ENCODE measurements at regions of chr17 and their contacts with region 1.

Region 1: GRCh38 chr17:58447039-58447975 is 30.0 kb upstream of the RNF43 start:
- DNase-seq: peak; percentile 88
- ATAC-seq: peak; percentile 99
- H3K4me3 ChIP-seq: no peak overlapping the region
- H3K27ac ChIP-seq: no peak overlapping the region
- H3K4me1 ChIP-seq: peaks cover 11% of the 10 kb centered on the region; the same call in 1 of the 2 replicates
- H3K27me3 ChIP-seq: peaks cover 0 to 14% of the 10 kb centered on the region in 2 experiments; a peak in 2 of 5 replicates
- CTCF ChIP-seq: peak; percentile 97
- EP300 ChIP-seq: peak in 1 of 2 experiments; percentile 9; a peak in 1 of 4 replicates
- POLR2A ChIP-seq: no peak
- RAD21 ChIP-seq: peak; percentile 98

Region 2: DNA sequence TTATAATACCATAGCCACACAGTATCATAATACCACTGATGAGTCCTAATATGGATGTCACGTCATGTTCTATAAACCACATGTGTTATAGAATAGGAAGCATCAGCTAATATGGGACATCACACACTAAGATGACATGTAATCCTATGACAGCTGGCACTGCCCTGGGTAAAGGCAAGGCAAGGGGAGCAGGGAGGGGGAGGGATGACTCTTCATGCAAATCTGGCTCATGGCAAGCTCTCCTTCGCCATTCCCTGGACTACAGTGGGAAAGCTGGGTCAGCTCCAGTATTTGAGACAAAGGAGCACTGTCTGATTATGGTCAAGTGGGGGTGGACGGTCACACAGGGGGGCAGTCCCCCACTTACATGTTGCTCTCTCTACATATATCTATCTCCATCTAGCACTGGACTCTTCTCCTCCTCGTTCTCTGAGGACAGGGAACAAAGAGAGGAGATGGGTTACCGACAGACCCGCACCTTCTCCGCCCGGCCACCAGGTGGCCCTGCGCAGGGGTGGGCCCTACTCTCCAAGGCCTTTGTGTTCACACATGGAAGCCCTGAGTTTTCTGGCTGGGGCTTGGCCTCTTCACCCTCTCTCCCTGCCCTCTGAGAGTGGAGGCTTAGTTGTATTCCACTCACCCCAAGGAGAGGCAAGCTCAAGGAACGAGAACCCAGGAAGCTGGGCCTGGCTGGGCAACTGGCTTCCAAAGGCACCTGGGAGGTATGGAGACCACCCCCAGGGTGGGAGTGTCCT is 143.2 kb before region 1 on chr17:
- CTCF ChIA-PET with region 1: interaction called, 24 read pairs
- POLR2A ChIA-PET with region 1: no interaction called
- in situ Hi-C with region 1: loop called (anchors 5 kb)
- intact Hi-C with region 1: loop called (anchors 2 kb)
- DNase-seq: peak; percentile 52
- ATAC-seq: peak; percentile 82
- H3K4me3 ChIP-seq: no peak overlapping the region
- H3K27ac ChIP-seq: no peak overlapping the region
- H3K4me1 ChIP-seq: peaks cover 12% of the 10 kb centered on the region
- H3K27me3 ChIP-seq: peaks cover 17 to 67% of the 10 kb centered on the region in 2 experiments; a peak in 4 of 5 replicates
- CTCF ChIP-seq: peak; percentile 91
- EP300 ChIP-seq: no peak
- POLR2A ChIP-seq: no peak
- RAD21 ChIP-seq: peak; percentile 66

Region 3: DNA sequence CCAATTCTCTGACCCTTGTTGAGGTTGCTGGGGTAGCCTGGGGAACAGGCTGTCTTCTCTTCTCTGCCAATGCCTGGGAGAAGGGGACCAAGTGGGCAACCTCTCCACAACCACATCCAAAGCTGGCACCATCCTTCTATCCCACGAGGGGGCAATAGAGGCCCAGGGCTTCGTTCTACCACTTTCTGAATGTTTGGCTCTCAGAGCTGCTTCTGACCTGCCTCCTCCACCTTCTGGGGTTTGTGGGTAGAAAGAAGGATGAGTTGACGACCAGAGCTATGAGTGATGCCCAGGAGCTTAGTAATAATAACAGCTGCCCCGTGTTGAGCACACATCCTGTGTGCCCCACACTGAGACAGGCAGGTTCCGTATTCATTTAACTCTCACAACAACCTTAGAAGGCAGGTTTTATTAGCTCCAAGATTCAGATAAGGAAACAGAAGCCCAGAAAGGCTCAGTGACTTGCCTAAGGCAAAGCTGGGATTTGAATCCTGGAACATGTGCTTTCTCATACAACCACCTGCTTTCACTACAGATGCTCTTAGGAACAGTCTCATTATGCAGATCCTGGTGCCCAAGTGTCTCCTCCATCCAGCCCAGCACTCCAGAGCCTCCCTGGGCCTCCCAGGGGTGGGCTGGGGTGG is 129.8 kb before region 1 on chr17:
- CTCF ChIA-PET with region 1: interaction called, 121 read pairs
- POLR2A ChIA-PET with region 1: interaction called, 3 read pairs
- in situ Hi-C with region 1: no loop called
- intact Hi-C with region 1: loop called (anchors 1 kb)
- DNase-seq: peak; percentile 75
- ATAC-seq: peak; percentile 84
- H3K4me3 ChIP-seq: no peak overlapping the region
- H3K27ac ChIP-seq: no peak overlapping the region
- H3K4me1 ChIP-seq: peaks cover 19% of the 10 kb centered on the region; the same call in 1 of the 2 replicates
- H3K27me3 ChIP-seq: peaks cover 17 to 68% of the 10 kb centered on the region in 2 experiments
- CTCF ChIP-seq: peak; percentile 99
- EP300 ChIP-seq: no peak
- POLR2A ChIP-seq: no peak
- RAD21 ChIP-seq: peak; percentile 96

Region 4: GRCh38 chr17:58487589-58488427 is 40.5 kb after region 1 on chr17 and contains the start of gene HSF5:
- CTCF ChIA-PET with region 1: no interaction called
- POLR2A ChIA-PET with region 1: no interaction called
- in situ Hi-C with region 1: no loop called
- intact Hi-C with region 1: no loop called
- DNase-seq: no peak
- ATAC-seq: peak; percentile 28
- H3K4me3 ChIP-seq: no peak within 1 kb of the TSS
- H3K27ac ChIP-seq: no peak within 1 kb of the TSS
- H3K4me1 ChIP-seq: peaks cover 13% of the 10 kb centered on the region
- H3K27me3 ChIP-seq: no peaks in the 10 kb centered on the region
- CTCF ChIP-seq: no peak
- EP300 ChIP-seq: no peak
- POLR2A ChIP-seq: no peak
- RAD21 ChIP-seq: no peak
- total RNA-seq, gene HSF5: not detected in 2 replicates

Region 5: DNA sequence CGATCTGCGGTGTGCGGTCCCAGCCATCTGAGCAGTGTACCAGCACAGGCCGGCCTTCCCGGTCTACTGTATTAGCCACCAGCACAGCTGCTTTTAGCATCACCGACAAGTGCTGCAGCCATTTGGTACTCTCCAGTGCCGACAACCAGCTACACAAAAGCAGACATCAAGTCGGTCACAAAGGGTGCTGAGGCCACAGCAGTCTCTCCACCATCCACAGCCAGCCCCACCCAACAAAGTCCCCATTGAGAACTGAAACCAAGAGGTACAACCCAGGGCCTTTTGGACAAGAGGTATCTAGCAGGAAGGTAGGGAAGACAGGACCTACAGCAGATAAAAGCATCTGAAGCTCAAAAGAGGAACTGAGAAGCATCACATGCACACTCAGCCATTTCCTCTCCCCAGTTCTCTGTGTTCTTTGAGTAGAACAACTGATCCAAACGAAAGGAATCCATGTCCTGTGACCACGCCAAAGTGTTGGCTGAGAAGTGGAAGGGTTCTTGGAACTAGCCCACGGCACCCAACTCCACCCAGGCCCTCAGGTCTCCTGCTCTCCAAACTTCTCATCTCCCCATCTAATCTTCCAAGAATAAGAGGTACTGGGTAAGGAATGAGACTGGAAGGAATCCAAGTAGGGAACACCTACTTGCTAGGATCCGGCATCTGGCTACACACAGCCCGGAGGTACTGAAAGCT is 57.7 kb after region 1 on chr17:
- CTCF ChIA-PET with region 1: no interaction called
- POLR2A ChIA-PET with region 1: no interaction called
- in situ Hi-C with region 1: loop called (anchors 10 kb)
- intact Hi-C with region 1: no loop called
- DNase-seq: no peak
- ATAC-seq: no peak; the same call in 2 of the 3 replicates
- H3K4me3 ChIP-seq: no peak overlapping the region
- H3K27ac ChIP-seq: no peak overlapping the region
- H3K4me1 ChIP-seq: peaks cover 24% of the 10 kb centered on the region
- H3K27me3 ChIP-seq: no peaks in the 10 kb centered on the region
- CTCF ChIP-seq: no peak
- EP300 ChIP-seq: no peak
- POLR2A ChIP-seq: no peak
- RAD21 ChIP-seq: no peak

Measured in HepG2 (cell line).